Mammary epithelial cell (primary cell): ENCODE measurements at regions of chr17 and their contacts with region 1.

Region 1: DNA sequence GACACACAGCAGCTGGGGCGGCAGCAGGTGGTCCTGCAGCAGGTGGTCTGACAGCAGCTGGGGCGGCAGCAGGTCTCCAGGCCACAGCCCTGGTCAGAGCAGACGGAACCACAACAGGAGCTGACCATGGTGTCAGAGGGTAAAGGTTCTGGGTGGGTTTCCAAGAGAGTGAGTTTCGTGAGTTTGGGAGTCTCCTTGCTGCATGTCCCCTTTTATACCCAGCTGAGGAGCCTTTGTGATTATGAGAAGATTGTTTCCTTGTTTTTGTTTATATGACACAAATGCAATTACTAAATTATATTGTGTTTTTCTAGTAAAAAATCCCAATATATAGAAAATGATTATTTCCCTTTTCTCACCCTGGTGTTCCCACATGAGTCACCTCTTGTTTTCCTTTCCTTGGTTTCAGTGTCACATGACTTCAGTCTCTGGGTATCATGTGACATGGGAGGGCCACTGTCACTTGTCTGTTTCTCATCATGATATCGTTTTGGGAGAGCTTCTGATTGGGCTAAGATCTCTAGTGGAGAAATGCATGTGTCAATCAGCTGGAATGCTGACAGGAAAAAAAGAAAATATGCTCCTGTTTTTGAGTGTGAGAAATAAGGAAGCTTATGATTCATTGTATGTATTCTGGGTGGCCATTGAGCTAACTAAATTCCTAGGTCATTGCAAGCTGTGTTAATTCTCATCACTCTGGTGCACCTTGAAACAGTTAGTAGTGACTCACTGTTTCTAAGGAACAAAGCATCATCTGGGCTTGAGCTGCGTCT is at the start of gene KRTAP4-6:
- DNase-seq: peak; percentile 93
- H3K4me3 ChIP-seq: no peak within 1 kb of the TSS
- H3K27ac ChIP-seq: peak within 1 kb of the TSS; percentile 60
- H3K4me1 ChIP-seq: peaks cover 10% of the 10 kb centered on the region
- H3K27me3 ChIP-seq: no peaks in the 10 kb centered on the region
- CTCF ChIP-seq: no peak
- total RNA-seq, gene KRTAP4-6: not detected

Region 2: GRCh38 chr17:41098476-41098875 is 42.1 kb before region 1 on chr17:
- CTCF ChIA-PET with region 1: no interaction called
- dilution Hi-C with region 1: no loop called
- in situ Hi-C with region 1: no loop called
- intact Hi-C with region 1: loop called (anchors 5 kb)
- DNase-seq: peak; percentile 76
- H3K4me3 ChIP-seq: no peak overlapping the region
- H3K27ac ChIP-seq: peak overlapping the region; percentile 40
- H3K4me1 ChIP-seq: peaks cover 13% of the 10 kb centered on the region
- H3K27me3 ChIP-seq: no peaks in the 10 kb centered on the region
- CTCF ChIP-seq: no peak

Region 3: DNA sequence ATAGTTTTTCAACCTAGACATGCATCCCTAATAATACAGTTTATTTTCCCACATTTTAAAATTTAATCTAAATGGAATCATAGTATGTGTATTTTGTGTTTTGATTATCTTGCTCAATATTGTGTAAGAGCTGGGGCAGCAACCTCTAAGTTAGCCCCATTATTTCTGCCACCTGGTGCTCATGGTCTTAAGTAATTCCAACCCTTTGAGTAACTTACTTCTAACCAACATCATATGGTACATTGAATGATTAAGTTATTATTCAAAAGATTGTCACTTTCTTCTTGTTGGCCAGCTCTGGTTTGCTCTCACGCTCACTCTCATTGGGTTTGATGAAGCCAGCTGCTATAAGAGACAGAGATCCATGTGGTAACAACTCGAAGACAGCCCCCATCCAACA is 31.3 kb after region 1 on chr17:
- CTCF ChIA-PET with region 1: no interaction called
- dilution Hi-C with region 1: no loop called
- in situ Hi-C with region 1: no loop called
- intact Hi-C with region 1: no loop called
- DNase-seq: peak; percentile 11
- H3K4me3 ChIP-seq: no peak overlapping the region
- H3K27ac ChIP-seq: no peak overlapping the region
- H3K4me1 ChIP-seq: no peaks in the 10 kb centered on the region
- H3K27me3 ChIP-seq: no peaks in the 10 kb centered on the region
- CTCF ChIP-seq: no peak

Region 4: DNA sequence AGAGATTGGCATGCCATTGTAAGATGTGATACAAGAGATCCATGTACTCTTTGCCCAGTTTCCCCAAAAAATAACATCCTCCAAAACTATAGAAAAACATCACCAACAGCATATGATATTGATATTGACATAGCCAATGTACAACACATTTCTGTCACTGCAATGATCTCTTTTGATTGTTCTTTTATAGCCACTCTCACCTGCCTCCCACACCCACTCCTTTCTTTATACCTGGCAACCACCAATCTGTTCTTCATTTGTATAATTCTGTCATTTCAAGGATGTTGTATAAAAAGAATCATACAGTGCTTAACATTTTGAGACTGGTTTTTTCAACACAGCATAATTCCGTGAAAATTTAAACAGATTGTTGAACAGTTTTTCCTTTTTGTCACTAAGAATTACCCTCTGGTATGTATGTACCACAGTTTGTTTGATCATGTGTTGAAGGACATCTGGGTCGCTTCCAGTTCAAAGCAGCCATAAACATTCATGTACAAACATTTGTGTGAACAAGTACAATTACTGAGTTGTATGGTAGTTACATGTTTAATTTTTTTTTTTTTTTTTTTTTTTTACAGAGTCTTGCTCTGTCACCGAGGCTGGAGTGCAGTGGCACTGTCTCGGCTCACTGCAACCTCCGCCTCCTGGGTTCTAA is 59.0 kb after region 1 on chr17:
- CTCF ChIA-PET with region 1: no interaction called
- dilution Hi-C with region 1: loop called (anchors 10 kb)
- in situ Hi-C with region 1: no loop called
- intact Hi-C with region 1: no loop called
- DNase-seq: no peak
- H3K4me3 ChIP-seq: no peak overlapping the region
- H3K27ac ChIP-seq: no peak overlapping the region
- H3K4me1 ChIP-seq: no peaks in the 10 kb centered on the region
- H3K27me3 ChIP-seq: no peaks in the 10 kb centered on the region
- CTCF ChIP-seq: no peak